ENCODE measurements at regions of chr5 and their contacts with region 1.

Region 1: GRCh38 chr5:151771259-151772028 is at the start of gene G3BP1:
- DNase-seq: peak; percentile 99 to 100
- ATAC-seq: peak; percentile 87 to 94
- H3K4me3 ChIP-seq: peak within 1 kb of the TSS; percentile 87
- H3K27ac ChIP-seq: peak within 1 kb of the TSS; percentile 96 to 99
- H3K4me1 ChIP-seq: peaks cover 34% of the 10 kb centered on the region
- CTCF ChIP-seq: no peak; the same call in 2 of the 3 replicates
- EP300 ChIP-seq: no peak
- POLR2A ChIP-seq: peak; percentile 100
- RAD21 ChIP-seq: peak; percentile 51 to 55; a peak in 4 of 5 replicates
- polyA plus RNA-seq, gene G3BP1: 126 and 167 TPM in 2 replicates

Region 2: DNA sequence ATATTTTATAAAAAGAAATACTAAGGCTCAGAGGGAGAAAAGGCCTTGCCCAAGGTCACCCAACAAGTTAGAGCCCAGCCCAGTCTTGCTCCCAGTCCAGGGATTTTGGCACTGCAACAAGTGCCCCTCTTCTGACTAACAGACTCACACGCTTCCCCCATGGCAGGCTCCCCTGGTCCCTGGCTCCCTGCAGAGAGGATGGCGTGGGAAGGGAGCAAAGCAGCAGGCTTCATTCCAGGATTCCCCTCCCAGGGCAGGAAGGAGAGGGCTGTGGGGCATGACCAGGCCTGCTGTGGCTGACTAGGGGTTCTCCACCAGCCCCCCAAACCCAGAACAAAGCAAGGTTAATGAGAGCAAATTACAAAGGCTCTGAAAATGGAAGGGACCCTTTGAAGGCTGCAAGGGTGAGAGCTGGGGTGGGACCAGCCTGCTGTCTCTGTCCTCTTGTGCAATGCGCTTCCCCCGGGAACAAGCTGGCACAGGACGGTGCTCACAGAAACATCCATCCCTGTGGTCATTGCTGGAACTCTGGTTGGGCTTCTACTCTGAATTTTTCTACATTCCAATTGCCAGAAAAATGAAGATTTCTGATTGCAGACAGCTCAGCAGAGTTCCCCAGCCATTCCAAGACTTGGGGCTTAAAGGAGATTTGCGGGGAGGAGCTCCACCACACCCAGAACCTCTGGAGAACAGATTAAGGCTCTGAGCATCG is 143.2 kb before region 1 on chr5:
- CTCF ChIA-PET with region 1: no interaction called
- POLR2A ChIA-PET with region 1: no interaction called
- DNase-seq: no peak
- ATAC-seq: peak; percentile 11 to 23; a peak in 3 of 6 replicates
- H3K4me3 ChIP-seq: no peak overlapping the region
- H3K27ac ChIP-seq: no peak overlapping the region
- H3K4me1 ChIP-seq: no peaks in the 10 kb centered on the region
- CTCF ChIP-seq: no peak
- EP300 ChIP-seq: no peak
- POLR2A ChIP-seq: no peak
- RAD21 ChIP-seq: no peak

Region 3: DNA sequence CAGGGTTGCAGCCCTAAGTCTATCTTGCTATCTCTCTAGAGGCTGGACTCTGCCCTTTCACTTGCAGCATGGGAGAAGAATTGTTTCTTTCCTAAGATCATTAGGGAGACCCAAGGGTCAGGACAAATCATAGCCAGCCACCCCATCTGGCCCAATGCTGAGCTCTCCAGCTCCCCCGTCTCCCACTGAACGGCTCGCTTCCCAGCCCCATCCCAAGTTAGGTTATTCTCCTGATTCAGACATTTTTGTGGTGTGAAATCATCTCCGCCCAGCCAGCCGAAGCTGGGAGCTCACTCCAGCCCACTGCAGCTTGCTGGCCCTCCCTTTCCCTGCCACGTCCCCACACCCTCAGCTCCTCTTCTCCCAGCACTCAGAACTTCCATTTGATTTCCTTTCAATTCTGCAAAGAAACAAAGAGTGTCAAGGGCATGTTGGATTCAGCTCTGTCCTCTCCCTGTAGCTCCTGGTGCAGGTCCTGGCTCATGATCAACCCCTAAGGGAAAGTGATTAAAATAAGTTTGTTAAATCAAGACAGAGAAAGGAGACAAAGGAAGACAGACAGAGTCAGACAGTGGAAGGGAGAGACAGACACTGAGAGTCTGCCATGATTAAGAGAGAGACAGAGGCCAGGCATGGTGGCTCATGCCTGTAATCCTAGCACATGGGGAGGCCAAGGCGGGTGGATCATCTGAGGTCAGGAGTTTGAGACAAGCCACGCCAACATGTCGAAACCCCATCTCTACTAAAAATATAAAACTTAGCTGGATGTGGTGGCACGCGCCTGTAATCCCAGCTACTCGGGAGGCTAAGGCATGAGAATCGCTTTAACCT is 72.2 kb before region 1 on chr5:
- CTCF ChIA-PET with region 1: interaction called, 3 read pairs
- POLR2A ChIA-PET with region 1: interaction called, 10 read pairs
- DNase-seq: peak; percentile 61 to 77
- ATAC-seq: peak; percentile 93 to 95
- H3K4me3 ChIP-seq: no peak overlapping the region
- H3K27ac ChIP-seq: peak overlapping the region; percentile 71 to 93
- H3K4me1 ChIP-seq: peaks cover 48% of the 10 kb centered on the region
- CTCF ChIP-seq: no peak
- EP300 ChIP-seq: no peak
- POLR2A ChIP-seq: no peak
- RAD21 ChIP-seq: 0 out of 5 replicates have a peak, but pooled peaks of 1 of the 2 experiments have one; percentile 3

Region 4: DNA sequence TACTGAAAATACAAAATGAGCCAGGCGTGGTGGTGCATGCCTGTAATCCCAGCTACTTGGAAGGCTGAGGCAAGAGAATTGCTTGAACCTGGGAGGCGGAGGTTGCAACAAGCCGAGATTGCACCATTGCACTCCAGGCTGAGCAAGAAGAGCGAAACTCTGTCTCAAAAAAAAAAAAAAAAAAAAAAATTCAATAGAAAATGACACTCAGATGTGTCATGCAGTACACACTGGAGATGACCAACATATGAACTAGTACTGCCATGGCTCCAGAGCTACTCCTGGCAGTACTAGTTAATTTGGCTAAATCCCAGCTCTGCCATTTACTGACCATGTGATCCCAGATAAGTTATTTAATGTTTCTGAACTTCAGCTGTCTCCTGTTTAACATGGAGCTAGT is 20.4 kb before region 1 on chr5:
- CTCF ChIA-PET with region 1: interaction called, 10 read pairs
- POLR2A ChIA-PET with region 1: interaction called, 4 read pairs
- DNase-seq: no peak
- ATAC-seq: no peak
- H3K4me3 ChIP-seq: no peak overlapping the region
- H3K27ac ChIP-seq: no peak overlapping the region
- H3K4me1 ChIP-seq: no peaks in the 10 kb centered on the region
- CTCF ChIP-seq: no peak
- EP300 ChIP-seq: no peak
- POLR2A ChIP-seq: no peak
- RAD21 ChIP-seq: no peak

Region 5: DNA sequence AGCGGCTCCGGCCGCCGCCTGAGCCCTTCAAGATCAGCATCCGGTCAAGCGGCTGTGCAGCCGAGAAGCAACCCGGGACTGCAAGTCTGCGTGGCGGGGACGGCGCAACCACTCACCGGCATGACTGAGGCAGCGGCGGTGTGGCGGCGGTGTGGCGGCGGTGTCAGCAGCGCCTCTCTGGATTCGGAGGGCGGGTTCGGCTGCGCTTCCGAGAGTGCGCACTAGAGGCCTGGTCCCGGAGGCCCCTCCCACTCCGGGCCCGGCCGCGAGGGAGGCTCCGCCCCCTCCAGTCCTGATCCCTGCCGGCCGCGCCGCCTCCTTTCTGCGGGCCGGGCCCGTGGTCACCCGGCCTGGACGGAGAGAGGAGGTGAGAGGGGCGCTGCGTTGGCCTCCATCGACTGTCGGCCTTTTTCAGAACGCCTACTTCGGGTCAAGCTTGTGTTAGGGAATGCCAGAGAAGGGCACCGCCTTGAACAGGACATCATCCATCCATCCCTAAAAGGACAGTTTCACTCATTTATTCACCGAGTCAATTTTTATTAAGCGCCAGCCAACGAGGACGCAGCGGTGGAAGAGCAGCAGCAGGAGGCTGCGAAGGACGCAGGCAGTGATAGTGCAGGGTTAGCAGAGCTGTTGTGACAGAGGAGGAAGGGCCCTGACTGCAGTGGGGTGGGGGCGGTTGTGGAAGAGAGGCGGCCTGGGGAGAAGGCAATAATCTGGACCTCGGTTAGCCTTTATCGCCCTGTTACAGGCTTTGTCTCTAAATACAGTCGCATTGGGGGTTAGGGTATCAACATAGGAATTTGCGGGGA is 12.8 kb before region 1 on chr5 and contains the start of gene ATOX1:
- CTCF ChIA-PET with region 1: interaction called, 10 read pairs
- POLR2A ChIA-PET with region 1: interaction called, 22 read pairs
- DNase-seq: peak; percentile 87 to 96
- ATAC-seq: peak; percentile 96 to 99
- H3K4me3 ChIP-seq: peak within 1 kb of the TSS; percentile 91
- H3K27ac ChIP-seq: peak within 1 kb of the TSS; percentile 85 to 93
- H3K4me1 ChIP-seq: peaks cover 12% of the 10 kb centered on the region
- CTCF ChIP-seq: no peak
- EP300 ChIP-seq: no peak
- POLR2A ChIP-seq: peak; percentile 85
- RAD21 ChIP-seq: no peak
- polyA plus RNA-seq, gene ATOX1: 58.1 and 78.8 TPM in 2 replicates

Measured in A549 (cell line).